Vagina (tissue), 2 donors: ENCODE measurements at regions of chr1 and their contacts with region 1.

Region 1: GRCh38 chr1:204565617-204566582 is 49.7 kb downstream of the MDM4 start:
- DNase-seq: no peak
- H3K4me3 ChIP-seq: no peak overlapping the region
- H3K27ac ChIP-seq: no peak overlapping the region
- H3K4me1 ChIP-seq: no peaks in the 10 kb centered on the region
- H3K27me3 ChIP-seq: no peaks in the 10 kb centered on the region
- CTCF ChIP-seq: peak; percentile 61 to 79 (median 65)
- POLR2A ChIP-seq: no peak

Region 2: DNA sequence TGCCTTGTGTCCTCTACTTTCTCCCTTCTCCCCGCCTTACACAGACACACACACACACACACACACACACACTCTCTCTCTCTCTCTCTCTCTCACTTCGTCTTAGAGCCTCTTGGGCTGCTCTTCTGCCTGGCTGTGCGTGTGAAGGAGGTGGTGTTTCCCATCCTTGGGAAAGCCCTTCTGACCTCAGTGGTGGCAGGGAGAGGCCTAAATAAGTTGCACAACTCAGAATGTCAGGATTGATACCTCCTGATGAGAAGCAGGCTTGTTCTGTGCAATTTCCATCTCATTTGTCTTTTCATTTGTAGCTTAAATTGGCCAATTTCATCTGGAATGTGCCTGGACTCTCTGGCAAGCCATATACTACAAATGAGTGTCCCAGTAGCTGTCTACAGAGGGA is 94.6 kb after region 1 on chr1:
- intact Hi-C with region 1: no loop called
- DNase-seq: no peak
- H3K4me3 ChIP-seq: no peak overlapping the region
- H3K27ac ChIP-seq: no peak overlapping the region
- H3K4me1 ChIP-seq: no peaks in the 10 kb centered on the region
- H3K27me3 ChIP-seq: no peaks in the 10 kb centered on the region
- CTCF ChIP-seq: no peak
- POLR2A ChIP-seq: no peak

Region 3: DNA sequence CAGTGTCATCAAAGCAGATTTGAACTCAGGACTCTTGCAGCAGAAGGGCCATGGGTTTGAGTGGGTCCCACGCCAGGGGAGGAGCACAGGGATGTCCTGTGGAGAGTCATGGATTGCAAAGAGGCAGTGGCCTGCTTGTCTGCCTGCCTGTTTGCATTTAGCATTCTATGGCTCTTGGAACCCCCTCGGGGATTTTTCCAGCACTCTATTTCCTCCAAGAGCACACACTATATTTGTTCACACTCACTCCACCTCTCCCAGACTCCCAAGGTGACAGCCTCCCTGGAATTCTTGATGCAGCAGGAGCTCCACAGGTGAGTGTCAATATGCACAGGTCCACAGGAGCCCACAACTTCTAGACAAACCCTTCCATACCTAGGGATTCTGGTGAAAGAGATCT is 192.7 kb after region 1 on chr1:
- intact Hi-C with region 1: loop called (anchors 5 kb)
- DNase-seq: no peak
- H3K4me3 ChIP-seq: no peak overlapping the region
- H3K27ac ChIP-seq: no peak overlapping the region
- H3K4me1 ChIP-seq: peaks cover under 1% of the 10 kb centered on the region
- H3K27me3 ChIP-seq: no peaks in the 10 kb centered on the region
- CTCF ChIP-seq: no peak
- POLR2A ChIP-seq: no peak